ENCODE measurements at regions of chrX and their contacts with region 1.

Region 1: DNA sequence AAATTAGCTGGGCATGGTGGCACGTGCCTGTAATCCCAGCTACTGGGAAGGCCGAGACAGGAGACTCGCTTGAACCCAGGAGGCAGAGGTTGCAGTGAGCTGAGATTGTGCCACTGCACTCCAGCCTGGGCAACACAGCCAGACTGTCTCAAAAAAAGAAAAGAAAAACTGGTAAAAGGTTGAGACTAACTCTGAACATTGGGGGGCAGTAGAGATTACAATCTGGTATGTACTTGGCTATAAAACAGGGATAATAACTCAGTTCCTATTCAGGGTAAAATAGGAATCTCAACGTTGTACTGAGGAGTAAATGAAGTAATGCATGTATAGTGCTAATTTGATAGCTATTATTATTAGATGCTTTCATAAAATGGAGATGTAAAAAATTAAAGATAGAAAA is 12.5 kb upstream of the KLF8 start:
- DNase-seq: no peak
- H3K4me3 Mint-ChIP-seq: no peak overlapping the region
- H3K27ac Mint-ChIP-seq: no peak overlapping the region
- H3K4me1 Mint-ChIP-seq: no peaks in the 10 kb centered on the region
- H3K27me3 Mint-ChIP-seq: peaks cover 1% of the 10 kb centered on the region

Region 2: DNA sequence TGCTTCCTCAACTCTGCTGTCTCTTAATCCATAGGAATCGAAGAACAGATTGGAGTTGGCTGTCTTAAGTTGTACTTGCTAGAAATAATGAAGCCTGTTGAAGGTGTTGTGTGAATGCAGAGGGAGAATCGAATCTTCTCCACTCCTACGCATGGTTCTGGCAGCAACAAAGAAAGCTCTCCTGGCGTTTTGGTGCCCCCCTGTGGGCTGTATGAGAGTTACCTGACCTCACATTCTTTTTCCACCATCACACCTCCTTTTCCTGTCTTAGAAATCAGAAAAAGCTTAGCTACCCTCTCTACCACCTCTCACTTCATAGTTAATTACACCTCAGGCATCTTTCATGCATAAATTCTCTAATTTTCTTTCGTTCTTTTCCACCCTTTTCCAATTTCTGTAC is 28.8 kb after region 1 on chrX:
- intact Hi-C with region 1: loop called (anchors 1 kb)
- DNase-seq: peak; percentile 29
- H3K4me3 Mint-ChIP-seq: no peak overlapping the region
- H3K27ac Mint-ChIP-seq: no peak overlapping the region
- H3K4me1 Mint-ChIP-seq: peaks cover 9% of the 10 kb centered on the region
- H3K27me3 Mint-ChIP-seq: no peaks in the 10 kb centered on the region

Region 3: DNA sequence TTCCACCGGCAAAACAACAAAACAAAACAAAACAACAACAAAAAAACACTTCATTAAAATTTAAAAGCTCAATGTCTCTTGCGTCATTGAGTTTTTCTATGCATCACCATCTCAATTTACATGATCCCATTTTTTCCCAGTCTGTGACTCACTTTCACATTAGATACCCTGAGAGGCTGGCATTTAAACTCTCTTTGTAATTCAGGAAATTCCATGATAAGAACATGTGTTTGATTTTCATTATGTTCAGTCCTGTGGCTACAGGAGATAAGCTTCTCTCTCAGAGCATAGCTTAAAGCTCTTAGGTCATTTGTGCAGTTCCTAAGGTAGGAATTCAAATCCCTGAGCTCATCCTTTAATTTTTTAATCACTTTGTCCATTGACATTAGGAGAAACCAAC is 613.9 kb after region 1 on chrX:
- intact Hi-C with region 1: no loop called
- DNase-seq: no peak
- H3K4me3 Mint-ChIP-seq: no peak overlapping the region
- H3K27ac Mint-ChIP-seq: no peak overlapping the region
- H3K4me1 Mint-ChIP-seq: no peaks in the 10 kb centered on the region
- H3K27me3 Mint-ChIP-seq: no peaks in the 10 kb centered on the region

Measured in activated T-helper 1 cell treated with anti-CD3 and anti-CD28 coated beads, Interleukin-12 subunit alpha, Interleukin-12 subunit beta, Interleukin-2, Interleukin-4 antibody, amounts not matched to agents 30 ng/mL and 10 ng/mL and 1 ng/mL, durations not matched to agents 14 hours and 24 hours and 36 hours (primary cell).